ENCODE measurements at regions of chr1 and their contacts with region 1.

Region 1: DNA sequence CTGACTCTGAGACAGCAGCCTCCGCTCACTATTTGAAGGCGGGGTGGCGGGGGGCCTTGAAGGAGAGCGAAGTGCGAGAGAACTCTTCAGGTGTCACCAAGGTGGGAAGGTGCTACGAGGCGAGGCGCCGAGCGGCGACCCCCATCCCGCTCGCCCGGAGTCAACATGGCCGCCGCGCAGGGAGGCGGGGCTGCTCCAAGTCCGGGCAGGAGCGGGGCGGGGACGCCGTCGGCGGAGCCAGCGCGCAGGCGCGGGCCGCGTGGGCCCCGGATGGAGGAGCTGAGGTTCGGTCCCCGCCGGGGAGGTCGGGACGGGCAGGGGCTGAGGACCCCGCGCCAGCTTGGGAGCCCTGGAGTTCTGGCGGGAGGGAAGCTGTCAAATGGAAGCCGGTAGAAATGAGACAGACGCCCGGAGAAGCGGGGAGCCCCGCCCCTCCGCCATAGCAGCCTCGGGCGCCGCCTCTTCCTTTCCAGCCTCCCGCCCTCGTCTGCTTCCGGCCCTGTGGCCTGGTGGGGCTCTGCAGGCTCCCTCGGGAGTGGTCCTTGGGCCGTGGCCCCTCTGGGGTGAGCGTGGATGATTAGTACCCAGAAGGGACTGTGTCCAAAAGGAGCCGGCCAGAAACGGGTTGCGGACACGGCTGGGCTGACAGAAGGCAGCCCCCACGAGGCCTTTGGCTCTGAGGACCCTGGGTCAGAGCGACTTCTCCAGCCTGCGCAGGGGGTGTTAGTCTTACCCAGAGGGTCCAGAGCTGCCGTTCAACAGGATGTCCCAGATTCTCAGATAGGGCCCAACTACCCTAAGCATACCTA is at the start of gene PIGV:
- DNase-seq: no peak
- H3K4me3 ChIP-seq: peak within 1 kb of the TSS; percentile 82
- H3K27ac ChIP-seq: peak within 1 kb of the TSS; percentile 99
- H3K27me3 ChIP-seq: no peaks in the 10 kb centered on the region
- CTCF ChIP-seq: 0 out of 2 replicates have a peak, but pooled peaks have one; percentile 7
- polyA plus RNA-seq, gene PIGV: 16.1 and 17.8 TPM in 2 replicates

Region 2: DNA sequence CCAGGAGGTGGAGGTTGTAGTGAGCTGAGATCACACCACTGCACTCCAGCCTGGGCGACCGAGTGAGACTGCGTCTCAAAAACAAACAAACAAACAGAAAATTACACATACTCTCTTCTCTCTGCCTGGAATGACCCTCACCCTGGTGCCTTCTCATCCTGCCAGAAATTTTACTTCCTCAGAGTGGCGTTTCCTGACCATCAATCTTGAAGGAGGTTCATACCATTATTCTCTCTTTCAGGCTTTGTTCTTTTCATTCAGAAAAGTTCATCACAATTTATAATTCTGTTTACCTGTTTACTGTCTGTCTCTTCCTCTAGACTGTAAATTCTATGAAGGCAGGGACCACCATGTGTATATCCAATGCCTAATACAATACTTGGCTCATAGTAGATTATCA is 179.0 kb before region 1 on chr1:
- CTCF ChIA-PET with region 1: interaction called, 424 read pairs
- POLR2A ChIA-PET with region 1: interaction called, 3 read pairs
- DNase-seq: no peak
- H3K4me3 ChIP-seq: no peak overlapping the region
- H3K27ac ChIP-seq: no peak overlapping the region
- H3K27me3 ChIP-seq: peaks cover 10% of the 10 kb centered on the region
- CTCF ChIP-seq: no peak

Region 3: GRCh38 chr1:26692793-26693490 is 95.0 kb before region 1 on chr1:
- CTCF ChIA-PET with region 1: interaction called, 48 read pairs
- POLR2A ChIA-PET with region 1: interaction called, 17 read pairs
- DNase-seq: peak; percentile 96
- H3K4me3 ChIP-seq: peak overlapping the region; percentile 71
- H3K27ac ChIP-seq: peak overlapping the region; percentile 94
- H3K27me3 ChIP-seq: no peaks in the 10 kb centered on the region
- CTCF ChIP-seq: no peak

Region 4: GRCh38 chr1:26697978-26698849 is 89.7 kb before region 1 on chr1:
- CTCF ChIA-PET with region 1: interaction called, 48 read pairs
- POLR2A ChIA-PET with region 1: interaction called, 17 read pairs
- DNase-seq: peak; percentile 90
- H3K4me3 ChIP-seq: peak overlapping the region; percentile 79
- H3K27ac ChIP-seq: peak overlapping the region; percentile 78
- H3K27me3 ChIP-seq: no peaks in the 10 kb centered on the region
- CTCF ChIP-seq: no peak

Region 5: GRCh38 chr1:26771643-26772321 is 16.1 kb before region 1 on chr1:
- CTCF ChIA-PET with region 1: interaction called, 10 read pairs
- POLR2A ChIA-PET with region 1: interaction called, 17 read pairs
- DNase-seq: peak; percentile 93
- H3K4me3 ChIP-seq: no peak overlapping the region
- H3K27ac ChIP-seq: peak overlapping the region; percentile 97
- H3K27me3 ChIP-seq: no peaks in the 10 kb centered on the region
- CTCF ChIP-seq: no peak

Region 6: DNA sequence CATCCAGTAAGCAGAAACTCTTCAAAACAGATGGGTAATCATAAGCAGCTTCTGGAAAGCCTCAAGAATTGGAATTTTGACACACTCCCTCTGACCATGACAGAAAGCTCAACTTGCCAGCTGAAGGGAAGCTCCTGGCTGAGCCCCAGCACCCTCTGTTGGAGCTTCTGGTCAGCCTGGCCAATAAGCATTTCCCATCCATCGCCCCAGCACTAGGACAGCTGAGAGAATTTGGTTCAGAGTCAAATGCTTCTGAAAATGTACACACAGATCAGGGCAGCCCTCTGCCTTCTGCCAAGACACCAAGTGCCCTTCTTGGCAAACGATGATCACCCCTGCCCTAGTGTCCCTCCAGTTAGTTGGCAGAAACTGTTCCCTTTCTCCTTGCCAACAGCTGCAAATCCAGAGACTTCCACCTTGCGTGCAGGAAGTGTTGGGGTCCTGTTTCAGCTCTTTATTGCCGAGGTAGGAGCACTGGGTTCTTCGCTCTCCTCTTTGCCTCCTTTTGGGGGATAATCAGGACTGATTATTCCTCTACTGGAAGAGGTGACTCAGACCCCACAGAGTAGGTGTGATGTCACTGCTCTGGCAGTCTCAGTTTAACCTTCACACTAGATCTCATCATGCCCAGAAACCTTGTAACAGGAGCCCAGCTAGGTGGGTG is 11.7 kb after region 1 on chr1:
- CTCF ChIA-PET with region 1: interaction called, 39 read pairs
- POLR2A ChIA-PET with region 1: interaction called, 4 read pairs
- DNase-seq: no peak
- H3K4me3 ChIP-seq: peak overlapping the region; percentile 32; the same call in 1 of the 2 replicates
- H3K27ac ChIP-seq: peak overlapping the region; percentile 69
- H3K27me3 ChIP-seq: no peaks in the 10 kb centered on the region
- CTCF ChIP-seq: no peak

Region 7: GRCh38 chr1:26811057-26811456 is 23.1 kb after region 1 on chr1:
- CTCF ChIA-PET with region 1: interaction called, 12 read pairs
- POLR2A ChIA-PET with region 1: no interaction called
- DNase-seq: no peak
- H3K4me3 ChIP-seq: no peak overlapping the region
- H3K27ac ChIP-seq: no peak overlapping the region
- H3K27me3 ChIP-seq: no peaks in the 10 kb centered on the region
- CTCF ChIP-seq: no peak

Region 8: DNA sequence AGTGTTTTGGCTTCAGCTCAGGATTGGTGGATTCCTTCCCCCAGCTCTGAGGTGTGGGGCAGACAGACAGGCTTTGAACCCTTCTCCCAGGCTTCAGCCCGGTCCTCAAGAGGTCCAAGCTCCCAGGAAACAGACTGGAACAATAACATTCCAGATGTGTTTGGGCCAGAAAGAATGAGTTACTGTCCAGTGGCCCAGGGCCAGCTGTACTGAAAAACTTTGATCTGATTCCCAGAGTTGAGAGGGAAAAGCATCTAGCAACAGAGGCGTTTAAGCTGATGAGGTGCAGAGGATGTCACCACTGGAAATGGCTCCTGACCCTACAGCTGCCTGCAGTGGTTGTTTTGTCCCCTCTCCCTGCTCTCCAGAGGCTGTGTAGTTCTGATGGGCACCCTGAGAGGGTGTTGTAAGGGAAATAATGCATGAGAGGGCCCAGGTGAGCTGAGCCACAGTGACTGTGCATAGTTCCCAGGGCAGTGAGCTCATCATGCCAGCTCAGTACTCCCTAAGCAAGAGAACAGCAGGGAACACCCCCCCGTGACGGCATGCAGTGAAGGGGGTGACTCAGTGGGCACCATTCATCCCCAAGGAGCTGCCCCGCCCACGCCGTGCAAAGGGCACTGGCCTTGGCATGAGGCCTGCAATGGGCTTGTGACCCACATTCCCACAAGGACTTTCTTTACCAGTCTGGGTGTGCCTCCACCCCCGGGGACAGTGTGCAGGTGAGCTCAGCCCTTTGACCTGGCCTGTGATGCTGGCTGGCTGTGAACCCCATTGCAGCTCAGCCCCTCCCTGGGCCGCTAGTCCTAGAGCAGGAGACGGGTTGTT is 61.3 kb after region 1 on chr1:
- CTCF ChIA-PET with region 1: no interaction called
- POLR2A ChIA-PET with region 1: no interaction called
- DNase-seq: no peak
- H3K4me3 ChIP-seq: no peak overlapping the region
- H3K27ac ChIP-seq: peak overlapping the region; percentile 87
- H3K27me3 ChIP-seq: no peaks in the 10 kb centered on the region
- CTCF ChIP-seq: no peak

Region 9: DNA sequence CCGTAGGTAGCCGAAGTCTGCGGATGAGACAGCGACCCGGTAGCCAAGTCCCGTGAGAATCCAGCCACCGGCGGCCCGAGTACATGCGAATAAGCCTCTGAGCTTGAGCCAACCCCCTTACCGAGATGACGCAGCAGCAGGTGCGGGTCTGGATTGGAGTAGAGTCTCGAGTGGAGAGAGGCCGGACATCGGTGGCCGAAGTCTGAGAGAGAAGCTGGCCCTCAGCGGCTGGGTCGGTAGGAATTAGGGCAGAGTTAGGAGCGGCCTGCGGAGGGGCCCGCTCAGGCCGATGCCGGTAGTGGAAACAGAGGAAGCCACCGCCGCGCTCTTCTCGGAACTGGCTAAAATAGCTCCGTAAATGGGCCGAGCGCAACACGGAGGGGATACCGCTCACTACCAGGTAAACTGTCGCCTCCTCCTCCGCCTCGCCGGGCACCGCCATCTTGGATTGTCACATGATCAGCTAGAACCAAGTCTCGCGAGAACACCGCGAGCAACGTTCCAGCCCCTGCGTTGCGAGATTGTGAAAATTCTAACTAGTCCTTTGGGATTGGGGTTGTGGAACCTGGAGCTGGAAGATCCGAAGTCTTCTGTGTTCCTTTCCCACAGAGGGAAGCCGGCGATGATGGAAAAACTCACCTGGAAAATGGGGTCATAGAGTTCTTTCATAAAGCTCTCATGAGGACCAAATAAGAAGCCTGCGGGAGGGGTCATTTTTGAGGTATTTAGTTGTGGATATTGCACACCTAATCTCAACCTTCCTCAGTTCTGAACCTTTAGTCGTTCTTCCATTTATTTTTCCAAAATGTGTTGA is 112.3 kb after region 1 on chr1 and contains the start of gene GPATCH3:
- CTCF ChIA-PET with region 1: no interaction called
- POLR2A ChIA-PET with region 1: no interaction called
- DNase-seq: peak; percentile 88
- H3K4me3 ChIP-seq: peak within 1 kb of the TSS; percentile 95
- H3K27ac ChIP-seq: peak within 1 kb of the TSS; percentile 85
- H3K27me3 ChIP-seq: no peaks in the 10 kb centered on the region
- CTCF ChIP-seq: no peak
- polyA plus RNA-seq, gene GPATCH3: 6.2 and 6.5 TPM in 2 replicates